CD8-positive, alpha-beta T cell (primary cell): ENCODE measurements at regions of chr2 and their contacts with region 1.

Region 1: GRCh38 chr2:101831351-101831865 is 133.9 kb downstream of the MAP4K4 start:
- DNase-seq: peak; percentile 30 to 75 (median 62)
- ATAC-seq: peak; percentile 67
- H3K4me3 ChIP-seq: no peak overlapping the region
- H3K4me3 Mint-ChIP-seq: no peak overlapping the region
- H3K27ac ChIP-seq: no peak overlapping the region
- H3K27ac Mint-ChIP-seq: peak overlapping the region; percentile 5
- H3K4me1 ChIP-seq: peaks cover 47% of the 10 kb centered on the region
- H3K4me1 Mint-ChIP-seq: peaks cover 52% of the 10 kb centered on the region
- H3K27me3 ChIP-seq: no peaks in the 10 kb centered on the region
- H3K27me3 Mint-ChIP-seq: no peaks in the 10 kb centered on the region
- CTCF ChIP-seq: peak; percentile 42

Region 2: GRCh38 chr2:101569886-101570520 is 261.4 kb before region 1 on chr2:
- CTCF ChIA-PET with region 1: no interaction called
- POLR2A ChIA-PET with region 1: no interaction called
- intact Hi-C with region 1: loop called in 1 of 2 experiments (anchors 5 kb)
- DNase-seq: no peak
- ATAC-seq: no peak
- H3K4me3 ChIP-seq: no peak overlapping the region
- H3K4me3 Mint-ChIP-seq: peak overlapping the region; percentile 69
- H3K27ac ChIP-seq: no peak overlapping the region
- H3K27ac Mint-ChIP-seq: peak overlapping the region; percentile 87
- H3K4me1 ChIP-seq: peaks cover 11% of the 10 kb centered on the region
- H3K4me1 Mint-ChIP-seq: peaks cover 37% of the 10 kb centered on the region
- H3K27me3 ChIP-seq: no peaks in the 10 kb centered on the region
- H3K27me3 Mint-ChIP-seq: no peaks in the 10 kb centered on the region
- CTCF ChIP-seq: no peak

Region 3: DNA sequence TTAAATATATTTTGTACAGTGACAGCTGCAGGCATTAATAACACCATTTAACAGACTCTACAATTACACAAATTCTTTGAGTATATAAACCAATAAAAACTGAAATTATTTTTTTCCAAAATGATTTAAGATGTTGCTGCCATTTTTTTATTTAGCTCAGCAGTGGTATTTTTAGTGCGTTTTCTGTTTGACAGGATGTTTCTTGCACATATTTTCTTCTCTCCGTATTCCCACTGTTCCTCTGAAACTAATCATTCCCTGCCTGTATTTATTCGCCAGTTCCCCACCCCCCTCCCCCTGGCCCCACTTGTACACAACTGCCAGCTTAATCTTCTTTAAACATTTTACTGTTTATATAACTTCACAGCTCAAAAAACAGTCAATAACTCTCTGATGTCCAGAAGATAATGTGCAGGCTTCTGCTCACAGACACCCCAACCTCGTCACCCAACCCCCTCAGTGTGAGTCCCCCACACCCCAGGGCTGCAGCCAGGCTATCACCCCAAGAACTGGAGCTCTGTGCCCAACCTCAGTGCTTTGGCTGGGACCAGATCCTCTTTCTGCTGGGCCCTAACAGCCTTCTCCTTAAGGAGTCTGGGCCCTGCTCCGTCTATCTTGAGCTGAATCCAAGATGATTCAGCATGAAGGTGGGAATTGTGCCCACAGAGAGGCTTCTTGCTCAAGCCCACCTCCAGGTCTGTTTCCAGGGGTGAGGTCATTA is 175.5 kb before region 1 on chr2:
- CTCF ChIA-PET with region 1: no interaction called
- POLR2A ChIA-PET with region 1: no interaction called
- intact Hi-C with region 1: loop called in 1 of 2 experiments (anchors 5 kb)
- DNase-seq: no peak
- ATAC-seq: no peak
- H3K4me3 ChIP-seq: no peak overlapping the region
- H3K4me3 Mint-ChIP-seq: no peak overlapping the region
- H3K27ac ChIP-seq: no peak overlapping the region
- H3K27ac Mint-ChIP-seq: no peak overlapping the region
- H3K4me1 ChIP-seq: peaks cover 12% of the 10 kb centered on the region
- H3K4me1 Mint-ChIP-seq: peaks cover 13% of the 10 kb centered on the region
- H3K27me3 ChIP-seq: no peaks in the 10 kb centered on the region
- H3K27me3 Mint-ChIP-seq: no peaks in the 10 kb centered on the region
- CTCF ChIP-seq: no peak

Region 4: DNA sequence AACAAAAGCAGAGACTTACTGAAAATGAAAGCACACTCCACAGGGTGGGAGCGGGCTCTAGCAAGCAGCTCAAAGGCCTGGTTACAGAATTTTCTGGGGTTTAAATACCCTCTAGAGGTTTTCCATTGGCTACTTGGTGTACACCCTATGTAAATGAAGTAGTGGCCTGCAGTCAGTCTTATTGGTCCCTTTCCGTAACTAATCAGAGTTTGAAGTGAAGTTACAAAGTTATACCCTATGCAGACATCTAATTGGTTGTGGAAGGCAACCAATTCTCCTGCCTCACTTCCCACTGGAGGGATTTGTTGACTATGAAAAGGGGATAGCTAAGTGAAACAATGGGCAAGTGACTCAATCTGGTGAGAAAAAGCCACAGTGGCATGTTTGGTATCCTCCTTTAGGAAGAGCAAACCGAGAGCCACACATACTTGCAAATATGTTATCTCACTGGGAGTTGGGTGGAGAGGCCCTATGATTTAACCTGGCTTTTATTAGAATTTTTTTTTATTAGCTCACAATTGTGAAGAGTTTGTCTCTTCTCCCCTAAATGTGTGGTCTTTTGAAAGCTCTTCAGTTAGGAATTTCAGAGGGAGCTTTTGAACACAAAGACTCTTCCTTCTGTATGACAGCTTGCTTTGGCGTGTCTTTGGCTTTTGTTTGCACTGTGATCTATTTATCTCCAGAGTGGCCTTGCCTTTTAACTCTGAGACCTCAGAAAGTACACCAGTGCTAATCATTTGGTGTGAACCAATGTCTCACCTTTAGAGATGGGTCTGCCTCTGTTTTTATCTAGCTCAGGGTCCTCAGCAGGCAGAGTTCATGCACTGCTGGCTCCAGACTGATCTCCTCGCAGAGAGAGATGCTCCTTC is 64.3 kb before region 1 on chr2:
- CTCF ChIA-PET with region 1: interaction called, 10 read pairs
- POLR2A ChIA-PET with region 1: no interaction called
- intact Hi-C with region 1: no loop called
- DNase-seq: no peak
- ATAC-seq: no peak
- H3K4me3 ChIP-seq: no peak overlapping the region
- H3K4me3 Mint-ChIP-seq: peak overlapping the region; percentile 36
- H3K27ac ChIP-seq: no peak overlapping the region
- H3K27ac Mint-ChIP-seq: peak overlapping the region; percentile 74
- H3K4me1 ChIP-seq: peaks cover 79% of the 10 kb centered on the region
- H3K4me1 Mint-ChIP-seq: peaks cover 96% of the 10 kb centered on the region
- H3K27me3 ChIP-seq: no peaks in the 10 kb centered on the region
- H3K27me3 Mint-ChIP-seq: no peaks in the 10 kb centered on the region
- CTCF ChIP-seq: no peak

Region 5: GRCh38 chr2:101844055-101844635 is 12.7 kb after region 1 on chr2:
- CTCF ChIA-PET with region 1: interaction called, 10 read pairs
- POLR2A ChIA-PET with region 1: no interaction called
- intact Hi-C with region 1: no loop called
- DNase-seq: no peak
- ATAC-seq: no peak
- H3K4me3 ChIP-seq: no peak overlapping the region
- H3K4me3 Mint-ChIP-seq: no peak overlapping the region
- H3K27ac ChIP-seq: no peak overlapping the region
- H3K27ac Mint-ChIP-seq: peak overlapping the region; percentile 15
- H3K4me1 ChIP-seq: peaks cover 12% of the 10 kb centered on the region
- H3K4me1 Mint-ChIP-seq: peaks cover 35% of the 10 kb centered on the region
- H3K27me3 ChIP-seq: no peaks in the 10 kb centered on the region
- H3K27me3 Mint-ChIP-seq: no peaks in the 10 kb centered on the region
- CTCF ChIP-seq: no peak